Body of pancreas (tissue), 4 donors: ENCODE measurements at regions of chr11 and their contacts with region 1.

Region 1: DNA sequence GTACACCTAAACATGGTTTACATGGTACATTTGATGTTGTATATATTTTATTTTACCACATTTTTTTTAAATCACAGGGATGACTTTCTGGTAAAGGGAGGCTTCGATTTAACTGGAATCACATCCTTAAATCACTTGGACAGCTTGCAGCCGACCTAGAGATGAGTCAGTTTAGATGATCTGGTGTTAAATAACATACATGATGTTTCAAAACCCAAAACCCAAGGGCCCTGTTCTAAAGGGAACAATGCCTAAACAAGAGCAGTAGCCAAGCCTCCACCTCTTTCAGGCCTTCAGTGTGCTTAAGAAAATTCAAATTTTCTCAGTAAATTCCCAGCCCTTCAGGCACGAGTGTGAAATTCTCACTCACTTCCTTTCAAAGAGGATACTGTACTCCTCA is 108.8 kb downstream of the WT1 start:
- DNase-seq: no peak
- ATAC-seq: no peak
- H3K4me3 ChIP-seq: no peak overlapping the region
- H3K27ac ChIP-seq: no peak overlapping the region
- H3K4me1 ChIP-seq: no peaks in the 10 kb centered on the region
- H3K27me3 ChIP-seq: peaks cover 0 to 3% of the 10 kb centered on the region in 2 donors
- CTCF ChIP-seq: no peak
- POLR2A ChIP-seq: no peak

Region 2: GRCh38 chr11:32255841-32256240 is 70.7 kb before region 1 on chr11:
- intact Hi-C with region 1: no loop called
- DNase-seq: no peak
- ATAC-seq: no peak
- H3K4me3 ChIP-seq: no peak overlapping the region
- H3K27ac ChIP-seq: no peak overlapping the region
- H3K4me1 ChIP-seq: no peaks in the 10 kb centered on the region
- H3K27me3 ChIP-seq: no peaks in the 10 kb centered on the region
- CTCF ChIP-seq: no peak
- POLR2A ChIP-seq: no peak

Region 3: GRCh38 chr11:32792948-32793475 is 466.5 kb after region 1 on chr11:
- intact Hi-C with region 1: loop called (anchors 10 kb)
- DNase-seq: peak; percentile 58 to 79 (median 75)
- ATAC-seq: peak; percentile 81
- H3K4me3 ChIP-seq: no peak overlapping the region
- H3K27ac ChIP-seq: no peak overlapping the region
- H3K4me1 ChIP-seq: peaks cover 7% of the 10 kb centered on the region
- H3K27me3 ChIP-seq: peaks cover 0 to under 1% of the 10 kb centered on the region in 2 donors
- CTCF ChIP-seq: peak in 6 of 7 experiments; percentile 56 to 73 (median 68)
- POLR2A ChIP-seq: no peak